ENCODE measurements at regions of chrX and their contacts with region 1.

Region 1: DNA sequence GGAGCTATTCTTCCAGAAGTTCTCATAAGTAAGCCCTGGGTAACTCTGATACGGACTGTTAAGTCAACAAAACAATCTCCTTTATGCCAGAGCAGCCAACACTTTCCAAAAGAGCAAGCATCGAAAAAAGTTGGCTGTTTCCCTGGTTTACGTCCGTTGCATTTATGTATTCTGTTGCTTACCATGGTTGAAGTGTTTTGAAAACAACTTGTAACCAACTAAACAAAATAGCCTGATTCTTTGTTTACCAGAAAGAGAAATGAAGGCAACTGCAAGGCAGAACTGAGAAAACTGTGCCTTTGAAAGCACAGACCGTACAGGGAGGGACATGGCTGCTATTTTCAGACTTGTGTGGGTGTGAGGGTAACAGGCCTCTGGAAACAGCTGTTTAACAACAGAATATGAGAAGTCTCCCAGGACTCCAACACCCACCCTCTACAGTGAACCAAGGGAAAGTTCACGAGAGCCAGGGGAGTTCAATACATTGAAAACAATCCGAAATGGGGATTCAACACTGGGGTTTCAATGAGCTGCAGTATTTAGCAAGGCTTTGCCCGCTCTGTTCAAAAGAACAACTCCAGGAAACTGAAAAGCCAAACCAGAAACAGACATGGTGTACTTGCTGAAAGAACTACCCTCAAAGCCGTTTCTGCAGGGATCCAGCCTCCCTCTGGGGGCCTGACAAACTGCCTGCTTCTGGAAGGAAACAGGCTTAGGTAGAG is 95.8 kb upstream of the EGFL6 start:
- DNase-seq: no peak
- ATAC-seq: peak; percentile 41 to 93 (median 84)
- H3K4me3 ChIP-seq: peak overlapping the region in 3 of 10 donors; percentile 0 to 29 (median 6)
- H3K27ac ChIP-seq: peak overlapping the region; percentile 41 to 88 (median 67)
- H3K4me1 ChIP-seq: peaks cover 0 to 32% (median 3%) of the 10 kb centered on the region in 9 donors
- H3K27me3 ChIP-seq: peaks cover 0 to 56% (median 0%) of the 10 kb centered on the region in 7 donors
- CTCF ChIP-seq: no peak

Region 2: GRCh38 chrX:13357925-13358324 is 115.7 kb before region 1 on chrX:
- intact Hi-C with region 1: loop called in 1 of 10 experiments (anchors 10 kb)
- DNase-seq: peak in 1 of 2 donors; percentile 7
- ATAC-seq: peak in 6 of 8 donors; percentile 39 to 77 (median 54)
- H3K4me3 ChIP-seq: no peak overlapping the region
- H3K27ac ChIP-seq: peak overlapping the region in 5 of 10 donors; percentile 37 to 62 (median 46)
- H3K4me1 ChIP-seq: peaks cover 0 to 19% (median 0%) of the 10 kb centered on the region in 9 donors
- H3K27me3 ChIP-seq: peaks cover 0 to 28% (median 0%) of the 10 kb centered on the region in 7 donors
- CTCF ChIP-seq: no peak

Region 3: GRCh38 chrX:13515211-13515930 is 41.8 kb after region 1 on chrX:
- intact Hi-C with region 1: no loop called
- DNase-seq: no peak
- ATAC-seq: no peak
- H3K4me3 ChIP-seq: no peak overlapping the region
- H3K27ac ChIP-seq: no peak overlapping the region
- H3K4me1 ChIP-seq: no peaks in the 10 kb centered on the region
- H3K27me3 ChIP-seq: peaks cover 0 to 31% (median 0%) of the 10 kb centered on the region in 7 donors
- CTCF ChIP-seq: no peak